Activated CD8-positive, alpha-beta memory T cell treated with anti-CD3 and anti-CD28 coated beads, Interleukin-2, amount 10 ng/mL, durations not matched to agents 7 days and 5 days (primary cell): ENCODE measurements at regions of chr6 and their contacts with region 1.

Region 1: GRCh38 chr6:116561377-116562018 is 7.9 kb downstream of the CALHM4 start:
- DNase-seq: peak; percentile 78
- ATAC-seq: peak; percentile 72
- H3K4me3 Mint-ChIP-seq: no peak overlapping the region
- H3K27ac Mint-ChIP-seq: no peak overlapping the region
- H3K4me1 Mint-ChIP-seq: peaks cover 3% of the 10 kb centered on the region
- H3K27me3 Mint-ChIP-seq: peaks cover 20% of the 10 kb centered on the region

Region 2: GRCh38 chr6:116287689-116288282 is 273.7 kb before region 1 on chr6:
- CTCF ChIA-PET with region 1: interaction called, 19 read pairs
- DNase-seq: no peak
- ATAC-seq: peak; percentile 55
- H3K4me3 Mint-ChIP-seq: no peak overlapping the region
- H3K27ac Mint-ChIP-seq: no peak overlapping the region
- H3K4me1 Mint-ChIP-seq: no peaks in the 10 kb centered on the region
- H3K27me3 Mint-ChIP-seq: no peaks in the 10 kb centered on the region

Region 3: DNA sequence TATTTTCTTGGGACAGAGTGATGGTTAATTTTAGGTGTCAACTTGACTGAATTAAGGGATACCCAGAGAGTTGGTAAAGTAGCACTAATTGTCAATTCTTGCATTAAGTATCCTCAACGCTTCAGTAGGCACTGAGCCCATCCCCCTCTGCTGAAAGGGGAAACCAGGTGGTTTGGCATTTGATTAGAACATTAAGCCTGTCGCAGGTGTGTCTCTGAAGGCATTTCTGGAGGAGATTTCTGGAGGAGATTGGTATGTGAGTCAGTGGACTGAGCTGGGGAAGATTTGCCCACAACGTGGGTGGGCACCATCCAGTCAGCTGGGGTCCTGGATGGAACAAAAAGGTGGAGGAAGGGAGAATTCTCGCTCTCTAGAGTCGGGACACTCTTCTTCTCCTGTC is 435.3 kb after region 1 on chr6:
- CTCF ChIA-PET with region 1: no interaction called
- DNase-seq: no peak
- ATAC-seq: no peak
- H3K4me3 Mint-ChIP-seq: no peak overlapping the region
- H3K27ac Mint-ChIP-seq: no peak overlapping the region
- H3K4me1 Mint-ChIP-seq: no peaks in the 10 kb centered on the region
- H3K27me3 Mint-ChIP-seq: no peaks in the 10 kb centered on the region